Mucosa of descending colon (tissue), 3 donors: ENCODE measurements at regions of chr3 and their contacts with region 1.

Region 1: DNA sequence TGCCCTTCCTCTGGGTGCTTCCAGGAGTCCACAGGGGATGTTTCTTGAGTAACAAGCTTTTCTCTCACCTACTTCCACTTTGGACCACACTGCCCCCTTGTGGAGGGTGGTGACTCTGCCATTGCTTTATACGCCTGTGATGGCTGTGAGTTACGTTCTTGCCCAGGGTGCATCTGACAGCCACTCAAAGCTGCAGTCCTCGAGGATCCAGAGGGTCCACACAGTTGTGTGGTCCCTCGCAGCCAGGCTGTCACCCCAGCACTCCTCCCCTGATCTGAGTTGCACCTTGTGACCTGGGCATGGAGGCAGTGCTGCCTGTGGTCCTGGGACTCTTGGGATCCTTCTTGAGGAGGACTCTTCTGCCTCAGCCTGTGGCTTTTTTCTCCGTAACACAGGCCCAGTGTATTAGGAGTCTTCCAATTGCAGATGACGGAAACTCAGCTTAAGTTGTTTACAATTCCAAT is 23.4 kb downstream of the FOXL2 start:
- DNase-seq: peak; percentile 71 to 93 (median 85)
- ATAC-seq: peak; percentile 97
- H3K4me3 ChIP-seq: no peak overlapping the region
- H3K4me1 ChIP-seq: no peaks in the 10 kb centered on the region
- CTCF ChIP-seq: peak; percentile 73

Region 2: DNA sequence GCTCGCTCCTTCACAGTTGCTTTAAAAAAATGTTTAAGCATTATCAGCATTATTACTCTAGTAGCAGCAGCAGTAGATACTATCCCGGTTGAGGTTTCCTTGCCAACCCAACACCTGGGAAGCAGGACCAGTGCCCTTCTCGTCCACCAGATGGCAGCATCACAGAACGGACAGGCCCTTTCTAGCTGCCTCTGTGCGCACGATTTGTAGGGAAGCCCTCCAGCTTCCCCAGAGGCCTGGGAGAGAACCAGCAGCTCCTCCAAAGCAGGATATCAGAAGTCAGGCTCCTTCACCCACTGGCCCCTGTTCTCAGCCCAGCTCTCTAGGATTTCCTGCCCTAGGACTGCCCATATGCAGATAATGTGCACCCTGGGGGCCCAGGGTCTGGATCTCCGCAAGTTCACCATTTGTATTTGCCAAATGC is 506.0 kb before region 1 on chr3:
- intact Hi-C with region 1: loop called in 1 of 2 experiments (anchors 10 kb)
- DNase-seq: peak in 2 of 3 donors; percentile 80 to 84
- ATAC-seq: peak; percentile 93
- H3K4me3 ChIP-seq: no peak overlapping the region
- H3K4me1 ChIP-seq: no peaks in the 10 kb centered on the region
- CTCF ChIP-seq: peak; percentile 77

Region 3: DNA sequence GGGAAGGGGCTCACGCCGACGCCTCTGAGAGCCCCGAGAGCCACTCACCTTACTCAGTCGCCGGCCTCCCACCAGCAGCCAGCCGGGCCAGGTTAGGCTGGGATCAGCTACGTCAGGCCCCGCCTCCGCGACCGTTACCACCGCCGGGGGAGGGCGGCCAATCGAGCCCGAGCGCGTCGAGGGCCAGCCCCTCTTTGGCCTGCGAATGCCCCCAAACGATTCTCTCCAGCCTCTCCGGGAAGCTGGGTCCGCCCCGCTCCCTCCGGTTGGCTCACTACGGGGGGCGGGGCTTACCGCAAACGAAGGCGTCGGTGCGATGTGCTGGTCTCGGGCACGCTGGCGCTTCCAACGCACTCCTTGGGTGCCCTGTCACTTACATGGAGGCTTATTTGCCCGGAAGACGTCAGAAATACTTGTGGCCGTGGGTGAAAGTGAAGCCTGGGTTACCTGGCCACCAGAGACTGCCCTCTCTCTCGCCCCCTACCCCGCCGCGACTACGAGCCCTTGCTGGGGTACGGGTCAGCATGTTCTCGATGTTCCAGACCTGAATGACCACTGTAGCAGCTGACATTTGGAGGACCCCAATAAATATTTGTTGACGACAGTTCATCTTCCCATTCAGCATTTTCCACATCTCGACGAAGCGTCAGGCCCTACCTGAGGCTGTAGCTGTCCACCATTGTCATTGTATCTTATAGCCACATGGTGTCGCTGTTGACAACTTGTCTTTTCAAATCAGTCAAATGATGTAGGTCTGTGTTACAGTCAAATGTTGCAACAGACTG is 329.2 kb before region 1 on chr3 and contains the start of gene CEP70:
- intact Hi-C with region 1: loop called (anchors 5 kb)
- DNase-seq: peak; percentile 95 to 96 (median 96)
- ATAC-seq: peak; percentile 95
- H3K4me3 ChIP-seq: peak within 1 kb of the TSS; percentile 11
- H3K4me1 ChIP-seq: peaks cover 29% of the 10 kb centered on the region
- CTCF ChIP-seq: peak; percentile 66
- total RNA-seq, gene CEP70: 29.7 to 56.9 (median 37.9) TPM

Region 4: DNA sequence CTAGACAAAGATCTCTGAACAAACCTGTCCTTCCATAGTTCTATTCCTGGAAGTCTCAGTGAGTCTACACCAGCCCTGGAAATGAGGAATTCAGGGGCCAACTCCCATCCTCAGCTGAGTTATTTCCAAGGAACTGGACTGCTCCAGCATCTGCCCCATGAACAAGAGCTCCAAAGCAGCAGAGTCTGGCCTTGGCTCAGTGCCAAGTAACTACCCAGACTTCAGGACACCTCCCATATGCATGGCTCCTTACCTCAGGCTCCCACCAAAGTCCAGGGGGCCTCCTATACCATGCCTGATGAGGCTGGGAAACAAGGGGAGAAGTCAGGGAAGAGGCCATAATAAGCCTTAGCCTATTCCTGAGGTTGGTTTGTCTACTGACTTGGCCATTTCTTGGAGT is 270.0 kb before region 1 on chr3:
- intact Hi-C with region 1: no loop called
- DNase-seq: peak in 1 of 3 donors; percentile 21
- ATAC-seq: no peak
- H3K4me3 ChIP-seq: no peak overlapping the region
- H3K4me1 ChIP-seq: no peaks in the 10 kb centered on the region
- CTCF ChIP-seq: no peak

Region 5: DNA sequence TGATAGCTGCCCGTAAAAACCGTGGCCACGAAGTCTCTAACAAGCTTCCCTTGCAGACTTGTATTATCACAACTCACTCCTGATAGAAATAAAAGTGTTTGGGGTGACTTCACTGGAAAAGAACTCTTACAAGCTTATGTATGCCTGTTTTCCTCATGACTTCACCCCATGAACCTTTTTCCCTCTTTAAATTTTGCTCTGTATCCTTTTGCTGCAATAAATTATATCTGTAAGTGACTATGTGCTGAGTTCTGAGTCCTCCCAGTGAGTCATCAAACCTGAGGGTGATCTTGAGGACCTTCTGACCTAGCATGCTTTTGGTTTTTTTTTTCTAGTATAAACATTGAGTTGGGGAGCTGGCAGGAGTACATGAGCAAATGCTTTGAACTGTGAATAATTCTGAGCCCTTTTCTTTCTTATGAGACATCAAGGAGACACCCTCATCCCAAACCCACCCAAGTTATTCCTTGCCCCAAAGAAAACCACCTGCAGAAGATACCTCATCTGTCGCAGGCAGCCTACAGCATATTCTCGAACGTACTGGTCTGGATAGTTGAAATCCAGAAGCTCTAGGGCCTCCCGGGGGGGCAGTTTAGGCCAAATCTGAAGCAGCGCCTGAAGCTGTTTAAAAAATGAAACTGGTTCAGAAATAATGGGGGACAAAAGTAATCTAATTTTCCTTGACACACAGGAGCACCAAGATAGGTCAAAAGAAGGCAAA is 229.1 kb before region 1 on chr3:
- intact Hi-C with region 1: loop called in 1 of 2 experiments (anchors 10 kb)
- DNase-seq: no peak
- ATAC-seq: peak; percentile 57
- H3K4me3 ChIP-seq: no peak overlapping the region
- H3K4me1 ChIP-seq: no peaks in the 10 kb centered on the region
- CTCF ChIP-seq: no peak

Region 6: GRCh38 chr3:138705675-138706074 is 217.9 kb before region 1 on chr3:
- intact Hi-C with region 1: loop called in 1 of 2 experiments (anchors 10 kb)
- DNase-seq: no peak
- ATAC-seq: no peak
- H3K4me3 ChIP-seq: no peak overlapping the region
- H3K4me1 ChIP-seq: no peaks in the 10 kb centered on the region
- CTCF ChIP-seq: no peak

Region 7: GRCh38 chr3:139020868-139021234 is 97.3 kb after region 1 on chr3 and contains the start of gene PRR23B:
- intact Hi-C with region 1: no loop called
- DNase-seq: no peak
- ATAC-seq: no peak
- H3K4me3 ChIP-seq: no peak within 1 kb of the TSS
- H3K4me1 ChIP-seq: no peaks in the 10 kb centered on the region
- CTCF ChIP-seq: no peak
- total RNA-seq, gene PRR23B: not detected